Heart right ventricle (tissue), 16 donors: ENCODE measurements at regions of chr2 and their contacts with region 1.

Region 1: DNA sequence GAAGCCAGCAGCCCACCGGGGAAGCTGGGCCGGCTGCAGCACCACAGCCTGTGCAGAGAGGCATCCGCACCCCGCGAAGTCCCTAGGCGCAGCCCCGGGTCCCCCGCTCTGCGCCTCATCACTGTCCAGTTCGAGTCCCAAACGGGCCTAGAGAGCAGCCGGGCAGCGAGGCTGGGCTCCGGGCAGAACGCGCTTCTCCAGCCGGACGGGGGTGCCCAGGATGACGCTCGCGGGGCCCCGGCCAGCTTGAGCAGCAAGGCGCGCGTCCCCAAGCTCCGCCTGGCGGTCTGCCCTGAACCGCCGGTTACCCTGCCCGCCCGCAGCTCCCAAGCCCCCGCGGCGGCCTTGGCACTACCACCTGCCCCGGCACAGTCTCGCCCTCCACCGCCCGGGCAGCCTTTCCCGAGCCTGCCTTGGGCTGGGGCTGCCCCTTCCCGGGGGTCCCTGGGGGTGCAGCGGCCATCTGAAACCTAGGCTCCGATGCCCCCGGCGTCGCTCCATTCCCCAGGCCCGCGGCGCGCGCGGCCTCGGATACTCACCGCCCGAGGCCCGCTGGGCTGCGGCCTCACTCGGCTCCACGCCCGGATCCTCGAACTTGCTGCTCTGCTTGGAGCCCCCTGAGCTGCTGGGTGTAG is 591 bp downstream of the SLC16A14 start:
- DNase-seq: peak; percentile 40 to 62
- ATAC-seq: peak; percentile 51 to 87 (median 70)
- H3K4me3 ChIP-seq: peak overlapping the region; percentile 51 to 93 (median 72)
- H3K27ac ChIP-seq: peak overlapping the region; percentile 53 to 91 (median 78)
- H3K4me1 ChIP-seq: peaks cover 0 to 24% (median 6%) of the 10 kb centered on the region in 9 donors
- H3K27me3 ChIP-seq: peaks cover 0 to 13% (median 0%) of the 10 kb centered on the region in 7 donors
- CTCF ChIP-seq: peak in 6 of 9 donors; percentile 22 to 35 (median 30)

Region 2: GRCh38 chr2:230007931-230008707 is 60.0 kb before region 1 on chr2:
- intact Hi-C with region 1: loop called in 3 of 10 experiments (anchors 5 to 10 kb)
- DNase-seq: peak; percentile 70 to 71
- ATAC-seq: peak in 6 of 8 donors; percentile 42 to 83 (median 64)
- H3K4me3 ChIP-seq: peak overlapping the region in 4 of 10 donors; percentile 10 to 27 (median 16)
- H3K27ac ChIP-seq: no peak overlapping the region
- H3K4me1 ChIP-seq: peaks cover 0 to 10% (median 5%) of the 10 kb centered on the region in 9 donors
- H3K27me3 ChIP-seq: no peaks in the 10 kb centered on the region
- CTCF ChIP-seq: peak; percentile 66 to 88 (median 86)

Region 3: GRCh38 chr2:230130668-230131364 is 62.7 kb after region 1 on chr2:
- intact Hi-C with region 1: loop called in 3 of 10 experiments (anchors 2 to 10 kb)
- DNase-seq: peak; percentile 58 to 69
- ATAC-seq: peak; percentile 74 to 93 (median 89)
- H3K4me3 ChIP-seq: peak overlapping the region in 2 of 10 donors; percentile 8 to 22
- H3K27ac ChIP-seq: peak overlapping the region; percentile 53 to 94 (median 82)
- H3K4me1 ChIP-seq: peaks cover 0 to 64% (median 28%) of the 10 kb centered on the region in 9 donors
- H3K27me3 ChIP-seq: no peaks in the 10 kb centered on the region
- CTCF ChIP-seq: no peak

Region 4: GRCh38 chr2:230153390-230153976 is 85.3 kb after region 1 on chr2:
- intact Hi-C with region 1: loop called in 5 of 10 experiments (anchors 2 to 10 kb)
- DNase-seq: no peak
- ATAC-seq: no peak
- H3K4me3 ChIP-seq: no peak overlapping the region
- H3K27ac ChIP-seq: no peak overlapping the region
- H3K4me1 ChIP-seq: no peaks in the 10 kb centered on the region
- H3K27me3 ChIP-seq: no peaks in the 10 kb centered on the region
- CTCF ChIP-seq: no peak

Region 5: DNA sequence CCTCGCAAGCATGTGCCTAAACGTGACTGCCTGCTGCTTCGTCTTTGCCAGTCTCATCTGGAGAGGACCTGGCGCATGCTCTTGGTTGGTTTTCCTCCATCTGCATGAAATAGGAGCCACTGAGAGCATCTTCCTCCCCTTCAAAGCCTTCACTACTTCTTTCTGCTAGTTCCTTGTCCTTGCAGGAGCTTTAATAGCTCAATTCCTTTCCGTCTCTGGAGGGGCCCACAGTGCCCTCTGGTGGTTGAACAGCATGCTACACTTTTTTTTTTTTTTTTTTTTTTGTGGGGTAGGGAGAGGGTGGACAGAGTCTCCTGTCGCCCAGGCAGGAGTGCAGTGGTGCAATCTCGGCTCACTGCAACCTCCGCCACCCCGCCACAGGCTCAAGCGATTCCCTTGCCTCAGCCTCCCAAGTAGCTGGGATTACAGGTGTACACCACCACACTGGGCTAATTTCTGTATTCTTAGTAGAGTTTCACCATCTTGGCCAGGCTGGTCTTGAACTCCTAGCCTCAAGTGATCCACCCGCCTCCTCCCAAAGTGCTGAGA is 92.1 kb after region 1 on chr2:
- intact Hi-C with region 1: loop called (anchors 1 to 10 kb)
- DNase-seq: peak; percentile 21 to 30
- ATAC-seq: peak; percentile 41 to 87 (median 71)
- H3K4me3 ChIP-seq: no peak overlapping the region
- H3K27ac ChIP-seq: no peak overlapping the region
- H3K4me1 ChIP-seq: peaks cover 0 to 8% (median 0%) of the 10 kb centered on the region in 9 donors
- H3K27me3 ChIP-seq: no peaks in the 10 kb centered on the region
- CTCF ChIP-seq: peak; percentile 68 to 90 (median 80)